ENCODE measurements at regions of chr4 and their contacts with region 1.

Region 1: DNA sequence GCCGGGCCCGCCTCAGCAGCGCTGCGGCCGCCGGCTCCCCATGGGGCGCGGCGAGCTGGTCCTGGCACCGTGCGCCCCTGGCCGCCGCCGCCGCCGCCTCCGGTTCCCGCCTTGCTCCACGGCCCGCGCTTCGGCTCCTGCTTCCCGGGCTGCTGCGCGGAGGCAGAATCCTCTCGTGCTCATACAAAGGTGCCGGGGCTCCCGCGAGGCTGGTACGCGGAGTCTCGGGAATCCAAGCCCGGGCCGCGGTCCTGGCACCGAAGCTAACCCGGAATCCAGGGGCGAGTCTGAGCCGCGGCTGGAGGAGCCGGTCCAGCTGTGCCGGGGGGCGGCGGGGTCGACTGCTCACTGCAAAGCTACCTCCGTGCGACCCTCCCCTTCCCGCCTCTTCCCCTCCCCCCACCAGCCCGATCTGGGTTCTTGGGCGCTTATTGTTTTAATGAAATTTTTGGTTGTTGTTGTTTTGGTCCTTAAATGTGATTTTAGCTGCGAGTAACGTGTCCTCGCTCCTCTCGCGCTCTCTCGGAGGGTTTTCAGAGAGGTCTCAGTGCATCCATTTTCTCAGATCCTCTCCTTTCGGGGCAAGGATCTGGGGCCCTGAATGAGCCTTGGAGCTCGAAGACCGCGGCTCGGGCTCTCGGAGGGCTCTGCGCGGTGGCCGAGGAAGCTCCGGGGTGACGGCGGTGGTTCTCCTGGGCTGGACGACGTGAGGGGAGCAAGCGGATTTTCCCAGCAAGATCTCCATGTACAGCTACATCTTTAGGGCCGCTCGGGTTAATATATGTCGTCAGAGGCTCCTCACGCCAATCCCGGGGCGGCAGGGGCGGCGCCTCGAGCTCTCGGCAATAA is at the start of gene HAND2:
- DNase-seq: peak in 1 of 2 experiments; percentile 72
- H3K4me3 ChIP-seq: peak within 1 kb of the TSS; percentile 25 to 57 (median 38); a peak in 7 of 8 replicates
- H3K27ac ChIP-seq: no peak within 1 kb of the TSS
- H3K4me1 ChIP-seq: peaks cover 0 to 29% (median 14%) of the 10 kb centered on the region in 4 experiments; a peak in 6 of 7 replicates
- H3K27me3 ChIP-seq: peaks cover 97 to 99% (median 98%) of the 10 kb centered on the region in 4 experiments
- CTCF ChIP-seq: no peak
- EP300 ChIP-seq: no peak
- POLR2A ChIP-seq: no peak
- RAD21 ChIP-seq: no peak
- total RNA-seq, gene HAND2: not detected in 2 replicates

Region 2: DNA sequence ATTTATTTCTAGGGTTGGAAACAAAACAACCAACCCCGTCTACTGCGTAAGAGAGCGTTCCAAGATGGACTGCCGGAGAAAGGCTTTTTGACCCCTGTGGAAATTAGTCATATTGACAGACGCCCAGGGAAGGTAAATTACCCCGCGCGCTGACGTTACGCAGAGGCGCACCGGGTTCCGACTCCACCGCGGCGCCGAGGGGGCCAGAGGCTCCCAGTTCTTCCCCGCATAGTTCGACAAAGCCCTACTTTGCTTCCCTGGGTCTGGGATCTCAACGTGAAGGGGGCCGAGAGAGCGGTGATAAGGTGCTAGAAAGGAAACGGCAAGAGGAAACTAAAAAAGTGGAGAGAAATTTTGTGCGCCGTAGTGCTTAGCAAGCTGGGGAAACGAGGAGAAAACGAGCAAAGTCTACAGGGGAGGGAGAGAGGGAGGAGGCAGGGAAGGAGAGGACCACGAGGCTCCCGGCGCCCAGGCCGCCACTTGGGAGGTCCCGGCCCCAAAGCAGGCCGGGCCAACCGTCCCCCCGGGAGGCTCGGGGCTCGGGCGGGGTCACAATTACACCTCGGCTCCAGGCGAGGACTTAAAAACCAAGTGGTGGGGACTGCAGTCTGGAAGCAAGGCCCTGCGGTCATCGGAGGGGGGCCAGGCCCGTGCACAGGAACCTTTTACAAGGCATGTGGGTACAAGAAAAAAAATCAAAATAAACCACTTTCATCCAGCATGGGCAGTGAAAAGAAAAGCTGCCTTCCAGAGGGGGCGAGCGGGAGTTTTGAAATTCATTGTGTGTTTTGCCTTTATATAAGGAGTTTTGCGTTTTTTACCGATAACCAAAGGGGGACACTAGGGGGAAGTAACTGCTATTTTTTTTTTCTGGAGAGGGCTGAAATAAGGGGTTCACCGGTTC is 12.8 kb before region 1 on chr4:
- CTCF ChIA-PET with region 1: interaction called, 16 read pairs
- POLR2A ChIA-PET with region 1: interaction called, 3 read pairs
- DNase-seq: peak in 1 of 2 experiments; percentile 74
- H3K4me3 ChIP-seq: peak overlapping the region; percentile 12 to 51 (median 16); a peak in 5 of 8 replicates
- H3K27ac ChIP-seq: no peak overlapping the region
- H3K4me1 ChIP-seq: peaks cover 4 to 13% (median 12%) of the 10 kb centered on the region in 4 experiments
- H3K27me3 ChIP-seq: peaks cover 97 to 100% (median 100%) of the 10 kb centered on the region in 4 experiments
- CTCF ChIP-seq: no peak
- EP300 ChIP-seq: no peak
- POLR2A ChIP-seq: no peak
- RAD21 ChIP-seq: no peak

Measured in H1 (cell line).